K562 (cell line): ENCODE measurements at regions of chr4 and their contacts with region 1.

Region 1: DNA sequence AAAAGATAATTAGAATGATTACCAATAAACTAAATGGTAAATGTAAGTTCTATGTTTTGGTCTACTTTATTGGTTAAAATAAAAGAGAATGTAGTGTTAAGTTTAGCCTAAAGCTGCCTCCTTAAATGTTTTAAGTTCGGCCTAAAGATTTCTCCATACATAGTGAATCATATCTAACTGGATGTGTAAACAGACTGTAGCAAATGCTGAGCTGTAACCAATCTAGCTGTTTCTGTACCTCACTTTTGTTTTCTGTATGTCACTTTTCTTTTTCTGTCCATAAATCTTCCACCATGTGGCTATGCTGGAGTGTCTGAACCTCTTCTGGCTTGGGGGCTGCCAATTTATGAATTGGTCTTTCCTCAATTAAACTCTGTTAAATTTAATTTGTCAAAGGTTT is 121.2 kb downstream of the TBCK start:
- DNase-seq: no peak
- ATAC-seq: no peak
- H3K4me3 ChIP-seq: no peak overlapping the region
- H3K27ac ChIP-seq: no peak overlapping the region
- H3K4me1 ChIP-seq: no peaks in the 10 kb centered on the region
- H3K27me3 ChIP-seq: no peaks in the 10 kb centered on the region
- CTCF ChIP-seq: no peak
- EP300 ChIP-seq: no peak
- POLR2A ChIP-seq: no peak
- RAD21 ChIP-seq: no peak

Region 2: GRCh38 chr4:105594099-105594993 is 600.5 kb before region 1 on chr4:
- CTCF ChIA-PET with region 1: no interaction called
- POLR2A ChIA-PET with region 1: no interaction called
- in situ Hi-C with region 1: loop called (anchors 25 kb)
- intact Hi-C with region 1: no loop called
- DNase-seq: no peak
- ATAC-seq: no peak
- H3K4me3 ChIP-seq: no peak overlapping the region
- H3K27ac ChIP-seq: no peak overlapping the region
- H3K4me1 ChIP-seq: no peaks in the 10 kb centered on the region
- H3K27me3 ChIP-seq: no peaks in the 10 kb centered on the region; a peak in 1 of 5 replicates
- CTCF ChIP-seq: no peak
- EP300 ChIP-seq: no peak
- POLR2A ChIP-seq: no peak
- RAD21 ChIP-seq: no peak

Region 3: GRCh38 chr4:105912633-105913032 is 282.2 kb before region 1 on chr4:
- CTCF ChIA-PET with region 1: no interaction called
- POLR2A ChIA-PET with region 1: no interaction called
- in situ Hi-C with region 1: no loop called
- intact Hi-C with region 1: no loop called
- DNase-seq: no peak
- ATAC-seq: no peak
- H3K4me3 ChIP-seq: no peak overlapping the region
- H3K27ac ChIP-seq: no peak overlapping the region
- H3K4me1 ChIP-seq: no peaks in the 10 kb centered on the region
- H3K27me3 ChIP-seq: no peaks in the 10 kb centered on the region; a peak in 1 of 5 replicates
- CTCF ChIP-seq: no peak
- EP300 ChIP-seq: no peak
- POLR2A ChIP-seq: no peak
- RAD21 ChIP-seq: no peak